K562 (cell line): ENCODE measurements at regions of chr3 and their contacts with region 1.

Region 1: GRCh38 chr3:109023656-109024254 is 70.1 kb upstream of the GUCA1C start:
- DNase-seq: peak; percentile 4 to 23 (median 12)
- ATAC-seq: peak; percentile 68; the same call in 2 of the 3 replicates
- H3K4me3 ChIP-seq: no peak overlapping the region
- H3K27ac ChIP-seq: no peak overlapping the region
- H3K4me1 ChIP-seq: no peaks in the 10 kb centered on the region
- H3K27me3 ChIP-seq: no peaks in the 10 kb centered on the region
- CTCF ChIP-seq: peak; percentile 39 to 65 (median 52); a peak in 4 of 6 replicates
- EP300 ChIP-seq: no peak
- POLR2A ChIP-seq: no peak
- RAD21 ChIP-seq: peak; percentile 62 to 68

Region 2: DNA sequence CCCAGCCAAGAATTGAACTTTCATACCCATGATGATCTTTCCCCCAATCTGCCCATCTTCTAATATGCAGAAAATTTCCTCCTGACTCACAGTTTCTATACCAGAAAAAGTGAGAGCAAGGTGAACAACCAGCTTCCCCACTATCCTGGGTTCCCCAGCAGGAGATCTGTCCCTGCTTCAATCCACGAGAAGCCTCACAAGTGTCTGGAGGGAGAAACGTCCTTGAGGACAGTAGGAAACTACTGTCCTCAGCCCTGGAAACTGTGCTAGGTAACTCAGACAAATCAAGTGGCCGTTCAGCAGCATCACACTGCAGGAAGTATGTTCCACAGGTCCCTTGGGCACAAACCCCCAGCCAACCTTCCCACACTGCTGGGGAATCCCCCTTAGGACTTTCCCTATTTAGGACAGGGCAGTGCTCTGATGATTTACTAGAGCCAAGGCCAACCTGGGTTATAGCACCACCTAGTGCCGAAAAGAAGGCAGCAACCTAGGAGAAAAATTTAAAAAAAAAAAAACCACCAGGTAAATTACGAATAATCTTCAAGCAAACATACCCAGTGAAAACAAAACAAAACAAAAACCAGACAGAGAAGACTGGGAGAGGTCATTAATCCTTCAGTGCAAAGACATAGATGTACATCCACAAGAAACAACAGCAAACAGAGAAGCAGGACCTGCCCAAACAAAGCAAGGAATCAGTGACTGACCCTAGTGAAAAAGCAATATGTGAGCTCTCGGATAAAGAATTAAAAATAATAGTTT is 58.2 kb after region 1 on chr3:
- CTCF ChIA-PET with region 1: interaction called, 5 read pairs
- POLR2A ChIA-PET with region 1: no interaction called
- in situ Hi-C with region 1: no loop called
- intact Hi-C with region 1: loop called (anchors 1 kb)
- DNase-seq: peak; percentile 13 to 29 (median 16)
- ATAC-seq: peak; percentile 60; the same call in 1 of the 3 replicates
- H3K4me3 ChIP-seq: no peak overlapping the region
- H3K27ac ChIP-seq: no peak overlapping the region
- H3K4me1 ChIP-seq: no peaks in the 10 kb centered on the region
- H3K27me3 ChIP-seq: no peaks in the 10 kb centered on the region
- CTCF ChIP-seq: peak; percentile 42 to 60 (median 51); a peak in 5 of 6 replicates
- EP300 ChIP-seq: no peak
- POLR2A ChIP-seq: no peak
- RAD21 ChIP-seq: peak in 1 of 2 experiments; percentile 44; a peak in 2 of 4 replicates

Region 3: GRCh38 chr3:109224333-109224732 is 200.6 kb after region 1 on chr3:
- CTCF ChIA-PET with region 1: interaction called, 3 read pairs
- POLR2A ChIA-PET with region 1: no interaction called
- in situ Hi-C with region 1: no loop called
- intact Hi-C with region 1: loop called (anchors 1 kb)
- DNase-seq: peak in 2 of 4 experiments; percentile 3 to 34
- ATAC-seq: peak; percentile 79
- H3K4me3 ChIP-seq: no peak overlapping the region
- H3K27ac ChIP-seq: no peak overlapping the region
- H3K4me1 ChIP-seq: no peaks in the 10 kb centered on the region
- H3K27me3 ChIP-seq: no peaks in the 10 kb centered on the region
- CTCF ChIP-seq: peak; percentile 36 to 60 (median 46); a peak in 5 of 6 replicates
- EP300 ChIP-seq: no peak
- POLR2A ChIP-seq: no peak
- RAD21 ChIP-seq: peak; percentile 34 to 41